WTC11 (cell line): ENCODE measurements at regions of chr19 and their contacts with region 1.

Region 1: DNA sequence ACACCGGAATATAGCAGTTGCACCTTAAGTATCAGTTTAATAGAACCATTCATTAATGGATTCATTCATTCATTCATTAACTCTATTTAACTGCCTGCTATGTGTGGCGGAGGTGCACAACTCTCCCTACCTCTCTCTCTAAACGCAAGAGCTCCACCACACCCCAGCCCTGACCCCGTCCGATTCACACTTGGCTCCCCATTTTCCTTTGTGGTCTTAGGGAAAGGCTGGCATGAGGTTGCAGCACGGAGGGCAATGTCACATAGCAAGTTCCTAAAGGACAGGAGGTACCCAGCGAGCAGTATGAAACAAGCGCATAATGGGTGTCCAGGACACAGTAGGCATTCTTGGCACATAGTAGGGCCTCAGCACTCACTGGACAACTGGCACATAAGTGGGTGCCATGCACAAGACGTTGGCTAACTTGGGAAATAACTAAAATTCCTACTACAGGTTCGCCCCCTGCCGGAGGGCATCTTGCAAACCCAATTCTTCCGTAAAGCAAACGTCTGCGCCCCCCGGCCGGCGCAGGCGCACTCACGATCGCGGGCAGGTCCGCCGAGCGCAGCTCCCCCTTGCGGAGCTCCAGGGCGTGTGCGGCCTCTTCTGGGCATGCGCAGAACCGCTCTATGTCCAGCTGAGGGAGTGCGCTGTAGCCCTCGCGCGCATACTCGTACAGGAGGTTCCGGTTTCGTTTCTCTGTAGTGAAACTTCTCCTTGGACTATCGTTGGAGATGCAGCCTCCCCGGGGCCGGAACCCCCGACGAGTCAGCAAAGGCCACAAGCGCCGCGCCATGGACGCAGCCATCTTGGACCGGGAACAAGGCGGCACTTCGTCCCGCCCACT is at the start of gene SARS2:
- DNase-seq: peak; percentile 94
- ATAC-seq: peak; percentile 55
- H3K4me3 Mint-ChIP-seq: peak within 1 kb of the TSS; percentile 82
- H3K27ac Mint-ChIP-seq: peak within 1 kb of the TSS; percentile 98
- H3K4me1 Mint-ChIP-seq: peaks cover 10% of the 10 kb centered on the region
- H3K27me3 Mint-ChIP-seq: peaks cover 4% of the 10 kb centered on the region; the same call in 1 of the 2 replicates
- CTCF ChIP-seq: peak; percentile 86; the same call in 1 of the 2 replicates
- total RNA-seq, gene SARS2: 66.4 to 74.7 TPM (median 69.6 TPM) in 3 replicates

Region 2: DNA sequence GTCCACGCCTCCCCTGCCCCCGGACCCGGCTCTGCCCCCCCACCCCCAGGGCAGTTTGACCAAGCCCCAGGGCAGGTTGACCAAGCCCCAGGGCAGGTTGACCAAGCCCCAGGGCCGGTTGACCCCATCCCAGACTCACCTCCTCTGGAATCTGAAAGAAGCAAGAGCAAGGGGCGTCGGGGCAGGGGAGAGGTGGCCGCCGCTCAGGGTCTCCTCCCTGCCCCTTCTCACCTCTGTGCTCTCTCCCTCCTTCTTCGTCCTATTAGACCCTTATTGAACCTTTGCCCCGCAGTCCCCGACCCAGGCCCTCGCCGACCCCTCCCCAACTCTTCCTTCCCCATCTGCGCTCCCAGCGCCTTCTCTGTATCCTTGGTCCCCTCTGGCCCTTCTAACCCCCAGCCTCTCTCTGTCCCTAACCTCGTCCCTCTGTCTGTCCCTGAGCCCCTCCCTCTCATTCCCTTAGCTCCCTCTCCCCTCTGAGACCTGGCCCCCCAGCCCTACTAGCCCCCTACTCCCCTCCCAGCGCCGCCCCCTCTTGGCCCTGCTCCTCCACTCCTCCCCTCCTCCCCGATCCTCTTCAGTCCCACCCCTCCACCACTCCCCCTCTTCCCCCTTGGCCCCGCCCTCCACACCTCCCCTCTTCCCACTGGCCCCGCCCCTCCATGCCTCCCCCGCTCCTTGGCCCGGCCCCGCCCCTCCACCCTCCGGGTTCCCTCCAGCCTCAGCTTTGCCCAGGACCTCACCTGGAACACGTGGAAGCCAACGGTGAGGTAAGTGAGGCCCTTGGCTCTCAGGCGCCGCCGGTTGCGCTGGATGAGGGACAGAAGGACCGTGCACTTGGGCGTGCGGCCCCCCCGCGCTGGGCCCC is 193.5 kb before region 1 on chr19:
- CTCF ChIA-PET with region 1: interaction called, 26 read pairs
- POLR2A ChIA-PET with region 1: no interaction called
- DNase-seq: peak; percentile 93
- ATAC-seq: peak; percentile 46
- H3K4me3 Mint-ChIP-seq: peak overlapping the region; percentile 68
- H3K27ac Mint-ChIP-seq: no peak overlapping the region
- H3K4me1 Mint-ChIP-seq: peaks cover 10% of the 10 kb centered on the region
- H3K27me3 Mint-ChIP-seq: peaks cover 23% of the 10 kb centered on the region
- CTCF ChIP-seq: no peak

Region 3: GRCh38 chr19:38849860-38850435 is 80.2 kb before region 1 on chr19 and contains the start of gene HNRNPL:
- CTCF ChIA-PET with region 1: interaction called, 26 read pairs
- POLR2A ChIA-PET with region 1: interaction called, 5 read pairs
- DNase-seq: peak; percentile 99
- ATAC-seq: peak; percentile 73
- H3K4me3 Mint-ChIP-seq: peak within 1 kb of the TSS; percentile 92
- H3K27ac Mint-ChIP-seq: peak within 1 kb of the TSS; percentile 99
- H3K4me1 Mint-ChIP-seq: peaks cover 39% of the 10 kb centered on the region
- H3K27me3 Mint-ChIP-seq: peaks cover under 1% of the 10 kb centered on the region; the same call in 1 of the 2 replicates
- CTCF ChIP-seq: peak; percentile 34; the same call in 1 of the 2 replicates
- total RNA-seq, gene HNRNPL: 680 to 779 TPM (median 683 TPM) in 3 replicates

Region 4: GRCh38 chr19:38891771-38892170 is 38.4 kb before region 1 on chr19:
- CTCF ChIA-PET with region 1: interaction called, 14 read pairs
- POLR2A ChIA-PET with region 1: interaction called, 4 read pairs
- DNase-seq: no peak
- ATAC-seq: no peak
- H3K4me3 Mint-ChIP-seq: no peak overlapping the region
- H3K27ac Mint-ChIP-seq: no peak overlapping the region
- H3K4me1 Mint-ChIP-seq: no peaks in the 10 kb centered on the region
- H3K27me3 Mint-ChIP-seq: peaks cover 2% of the 10 kb centered on the region; the same call in 1 of the 2 replicates
- CTCF ChIP-seq: no peak

Region 5: DNA sequence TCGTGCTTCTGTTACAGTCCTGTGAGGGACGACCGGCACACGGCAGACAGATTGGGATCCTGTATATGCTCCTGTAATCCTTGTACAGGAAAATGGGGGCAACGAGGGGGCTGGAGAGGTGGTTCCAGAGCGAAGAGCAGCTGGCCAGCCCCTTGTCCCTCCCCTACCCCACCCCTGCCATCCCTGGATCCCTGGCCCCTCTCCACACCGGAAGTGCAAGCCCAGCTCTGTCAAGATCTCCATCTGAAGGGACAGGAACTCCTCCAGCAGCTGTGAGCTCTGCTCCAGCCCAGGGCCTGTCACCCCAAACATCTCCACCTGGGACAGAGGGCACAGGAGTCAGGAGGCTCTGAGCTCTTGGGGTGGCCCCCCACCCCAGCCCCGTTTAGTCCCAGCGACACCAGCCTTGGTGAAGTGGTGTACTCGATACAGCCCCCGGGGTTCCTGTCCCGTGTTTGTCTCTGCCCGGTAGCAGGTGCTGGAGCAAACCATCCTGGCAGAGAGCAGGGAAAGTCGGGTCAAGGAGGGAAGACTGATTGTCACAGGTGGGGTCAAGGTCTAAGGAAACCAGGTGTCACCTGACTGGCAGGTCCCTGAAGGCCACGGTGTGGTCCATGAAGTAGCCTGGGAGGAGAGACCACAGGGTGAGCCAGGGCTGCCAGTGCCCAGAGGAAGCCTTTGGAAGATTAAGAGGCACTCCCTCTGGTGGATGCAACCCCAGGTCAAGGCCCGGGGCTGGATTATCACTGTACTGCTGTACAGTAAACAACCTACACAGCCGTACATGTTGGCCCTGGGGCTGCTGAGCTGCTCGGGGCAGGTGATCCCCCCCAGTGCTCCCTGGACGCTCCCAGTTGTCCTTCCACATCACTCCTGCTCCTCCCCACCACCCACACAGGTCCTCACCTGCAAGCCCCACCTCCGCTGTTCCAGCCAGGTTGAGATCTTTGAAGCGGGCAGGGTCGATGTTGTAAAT is 12.3 kb before region 1 on chr19:
- CTCF ChIA-PET with region 1: interaction called, 24 read pairs
- POLR2A ChIA-PET with region 1: interaction called, 3 read pairs
- DNase-seq: no peak
- ATAC-seq: peak; percentile 33
- H3K4me3 Mint-ChIP-seq: no peak overlapping the region
- H3K27ac Mint-ChIP-seq: peak overlapping the region; percentile 43; the same call in 1 of the 2 replicates
- H3K4me1 Mint-ChIP-seq: no peaks in the 10 kb centered on the region
- H3K27me3 Mint-ChIP-seq: peaks cover 2% of the 10 kb centered on the region
- CTCF ChIP-seq: no peak

Region 6: DNA sequence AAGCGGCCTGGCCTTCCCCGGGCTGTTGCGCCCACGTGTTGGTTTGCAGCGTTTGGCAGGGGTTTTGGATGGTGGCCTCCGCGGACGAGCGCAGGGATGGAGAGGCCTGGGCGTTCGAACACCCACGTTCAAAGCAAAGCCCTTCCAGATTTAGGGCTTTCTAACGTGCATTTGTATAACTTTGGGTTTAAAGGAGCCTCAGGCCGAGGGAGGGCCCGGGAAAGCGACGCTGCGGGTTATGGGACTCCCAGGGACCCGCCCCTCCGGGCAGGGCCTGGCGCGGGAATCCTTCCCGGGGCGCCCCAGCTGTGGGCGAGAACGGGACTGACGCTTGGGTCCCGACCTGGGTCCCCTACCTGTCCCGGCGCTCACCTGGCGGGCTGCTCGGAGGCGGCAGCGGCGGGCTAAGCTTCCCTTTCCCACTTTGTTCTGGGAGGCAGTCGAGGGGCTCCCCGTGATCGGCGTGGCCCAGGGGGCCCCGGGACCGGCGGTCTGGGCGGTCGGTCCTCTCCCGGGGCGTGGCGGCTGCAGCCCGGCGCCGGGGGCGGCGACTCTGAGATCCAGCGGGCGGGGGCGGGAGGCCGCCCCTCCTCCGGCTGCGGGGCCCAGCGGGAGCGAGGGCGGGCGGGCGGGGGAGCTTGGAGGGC is 45.2 kb after region 1 on chr19 and contains the start of gene FBXO17:
- CTCF ChIA-PET with region 1: interaction called, 15 read pairs
- POLR2A ChIA-PET with region 1: interaction called, 4 read pairs
- DNase-seq: peak; percentile 58
- ATAC-seq: peak; percentile 53
- H3K4me3 Mint-ChIP-seq: peak within 1 kb of the TSS; percentile 97
- H3K27ac Mint-ChIP-seq: peak within 1 kb of the TSS; percentile 98
- H3K4me1 Mint-ChIP-seq: peaks cover 15% of the 10 kb centered on the region
- H3K27me3 Mint-ChIP-seq: peaks cover under 1% of the 10 kb centered on the region; the same call in 1 of the 2 replicates
- CTCF ChIP-seq: no peak
- total RNA-seq, gene FBXO17: 16.8 to 22.2 TPM (median 18.6 TPM) in 3 replicates